ENCODE measurements at regions of chr2 and their contacts with region 1.

Region 1: DNA sequence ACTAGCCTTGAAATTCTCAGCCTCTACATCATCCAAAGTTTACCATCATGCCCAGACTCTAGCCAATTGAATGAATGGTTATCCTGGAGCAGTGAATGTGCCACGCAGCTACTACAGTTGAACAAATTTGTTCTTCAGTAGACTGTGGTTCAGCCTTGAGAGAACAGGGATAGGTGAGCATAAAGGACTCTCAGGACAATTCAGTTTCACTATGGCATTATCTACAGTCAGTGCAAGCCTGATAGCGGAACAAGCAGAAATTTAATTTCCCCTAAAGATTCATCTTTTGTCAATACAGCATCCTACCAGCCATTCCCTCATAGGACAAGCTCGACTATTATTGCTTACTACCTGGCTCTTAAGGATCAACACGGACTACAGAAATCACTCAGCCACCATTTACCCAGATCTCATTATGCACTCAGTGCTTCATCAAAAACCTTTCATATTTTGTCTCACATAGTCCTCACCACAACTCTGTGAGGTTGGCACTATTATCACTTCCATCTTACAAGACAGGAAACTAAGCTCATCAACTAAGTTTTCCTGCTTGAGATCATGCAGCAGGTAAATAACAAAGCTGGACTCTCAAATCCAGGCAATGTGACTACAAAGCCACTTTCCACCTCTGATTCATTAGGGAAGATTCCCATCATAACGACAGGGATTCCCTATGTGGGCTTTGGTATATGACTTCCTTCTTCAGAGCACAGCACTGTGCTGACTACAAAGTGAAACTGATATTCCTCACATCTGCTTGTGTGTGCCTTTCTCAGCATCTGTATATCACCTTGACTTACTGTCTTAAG is 181.5 kb upstream of the ACVR2A start:
- DNase-seq: no peak
- ATAC-seq: peak; percentile 88
- H3K4me3 Mint-ChIP-seq: peak overlapping the region; percentile 58
- H3K27ac Mint-ChIP-seq: peak overlapping the region; percentile 85
- H3K4me1 Mint-ChIP-seq: peaks cover 24% of the 10 kb centered on the region
- H3K27me3 Mint-ChIP-seq: no peaks in the 10 kb centered on the region

Region 2: DNA sequence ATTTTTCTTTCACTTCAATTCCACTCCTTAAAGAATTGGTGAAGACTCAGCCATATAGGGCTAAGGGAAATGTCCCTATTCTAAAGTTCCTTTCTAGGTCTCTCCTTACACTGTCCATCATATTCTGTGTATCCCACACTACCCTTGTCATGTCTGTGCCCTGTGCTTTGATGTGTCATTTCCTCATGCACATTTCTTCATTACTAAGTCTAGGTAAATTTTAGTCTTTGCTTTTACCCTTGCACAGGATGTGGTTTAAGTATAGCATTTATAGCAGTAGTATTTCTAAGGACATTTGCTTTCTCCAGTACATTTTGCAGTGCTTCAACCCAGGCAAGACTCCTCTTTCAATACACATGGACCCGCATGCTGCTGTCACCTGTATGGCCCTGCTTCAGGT is 40.0 kb before region 1 on chr2:
- CTCF ChIA-PET with region 1: no interaction called
- POLR2A ChIA-PET with region 1: no interaction called
- intact Hi-C with region 1: loop called in 1 of 2 experiments (anchors 5 kb)
- DNase-seq: peak; percentile 23
- ATAC-seq: peak; percentile 99
- H3K4me3 Mint-ChIP-seq: peak overlapping the region; percentile 41
- H3K27ac Mint-ChIP-seq: peak overlapping the region; percentile 81
- H3K4me1 Mint-ChIP-seq: peaks cover 34% of the 10 kb centered on the region
- H3K27me3 Mint-ChIP-seq: no peaks in the 10 kb centered on the region

Region 3: GRCh38 chr2:147628971-147629421 is 34.4 kb before region 1 on chr2:
- CTCF ChIA-PET with region 1: no interaction called
- POLR2A ChIA-PET with region 1: no interaction called
- intact Hi-C with region 1: loop called (anchors 2 to 5 kb)
- DNase-seq: no peak
- ATAC-seq: peak; percentile 43
- H3K4me3 Mint-ChIP-seq: no peak overlapping the region
- H3K27ac Mint-ChIP-seq: peak overlapping the region; percentile 59
- H3K4me1 Mint-ChIP-seq: peaks cover 57% of the 10 kb centered on the region
- H3K27me3 Mint-ChIP-seq: no peaks in the 10 kb centered on the region

Region 4: DNA sequence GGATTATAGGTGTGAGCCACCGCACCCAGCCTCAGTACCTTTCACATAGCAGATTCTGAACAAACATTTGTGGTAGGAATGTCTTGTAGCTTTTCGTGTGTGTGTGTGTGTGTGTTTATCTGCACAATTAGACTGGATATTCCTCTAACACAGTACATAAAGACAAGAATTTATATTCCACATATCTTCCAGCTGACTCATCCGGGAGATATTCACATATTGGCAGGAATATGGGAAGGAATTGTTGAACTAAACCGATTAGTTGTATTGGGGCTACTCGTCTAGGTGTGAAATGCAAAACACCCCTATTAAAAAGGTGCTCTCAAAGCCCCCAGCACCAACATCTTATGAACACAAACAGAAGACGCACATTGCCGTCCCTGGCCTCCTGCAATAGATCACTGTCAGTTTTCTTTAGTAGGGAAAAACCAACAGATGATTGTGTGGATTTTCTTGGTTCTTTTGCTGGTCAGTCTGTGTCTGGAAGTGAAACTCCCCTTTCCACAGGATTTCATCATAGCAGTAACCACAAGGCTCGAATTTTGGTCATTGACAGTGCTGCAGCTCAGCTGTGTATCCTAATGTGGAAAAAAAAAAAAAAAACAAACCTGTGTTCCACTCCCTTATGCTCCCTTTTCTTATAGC is 27.0 kb before region 1 on chr2:
- CTCF ChIA-PET with region 1: no interaction called
- POLR2A ChIA-PET with region 1: no interaction called
- intact Hi-C with region 1: loop called (anchors 1 to 2 kb)
- DNase-seq: no peak
- ATAC-seq: no peak
- H3K4me3 Mint-ChIP-seq: no peak overlapping the region
- H3K27ac Mint-ChIP-seq: no peak overlapping the region
- H3K4me1 Mint-ChIP-seq: peaks cover 27% of the 10 kb centered on the region
- H3K27me3 Mint-ChIP-seq: no peaks in the 10 kb centered on the region

Region 5: GRCh38 chr2:147679191-147679954 is 16.0 kb after region 1 on chr2:
- CTCF ChIA-PET with region 1: no interaction called
- POLR2A ChIA-PET with region 1: no interaction called
- intact Hi-C with region 1: no loop called
- DNase-seq: no peak
- ATAC-seq: no peak
- H3K4me3 Mint-ChIP-seq: no peak overlapping the region
- H3K27ac Mint-ChIP-seq: no peak overlapping the region
- H3K4me1 Mint-ChIP-seq: no peaks in the 10 kb centered on the region
- H3K27me3 Mint-ChIP-seq: no peaks in the 10 kb centered on the region

Region 6: DNA sequence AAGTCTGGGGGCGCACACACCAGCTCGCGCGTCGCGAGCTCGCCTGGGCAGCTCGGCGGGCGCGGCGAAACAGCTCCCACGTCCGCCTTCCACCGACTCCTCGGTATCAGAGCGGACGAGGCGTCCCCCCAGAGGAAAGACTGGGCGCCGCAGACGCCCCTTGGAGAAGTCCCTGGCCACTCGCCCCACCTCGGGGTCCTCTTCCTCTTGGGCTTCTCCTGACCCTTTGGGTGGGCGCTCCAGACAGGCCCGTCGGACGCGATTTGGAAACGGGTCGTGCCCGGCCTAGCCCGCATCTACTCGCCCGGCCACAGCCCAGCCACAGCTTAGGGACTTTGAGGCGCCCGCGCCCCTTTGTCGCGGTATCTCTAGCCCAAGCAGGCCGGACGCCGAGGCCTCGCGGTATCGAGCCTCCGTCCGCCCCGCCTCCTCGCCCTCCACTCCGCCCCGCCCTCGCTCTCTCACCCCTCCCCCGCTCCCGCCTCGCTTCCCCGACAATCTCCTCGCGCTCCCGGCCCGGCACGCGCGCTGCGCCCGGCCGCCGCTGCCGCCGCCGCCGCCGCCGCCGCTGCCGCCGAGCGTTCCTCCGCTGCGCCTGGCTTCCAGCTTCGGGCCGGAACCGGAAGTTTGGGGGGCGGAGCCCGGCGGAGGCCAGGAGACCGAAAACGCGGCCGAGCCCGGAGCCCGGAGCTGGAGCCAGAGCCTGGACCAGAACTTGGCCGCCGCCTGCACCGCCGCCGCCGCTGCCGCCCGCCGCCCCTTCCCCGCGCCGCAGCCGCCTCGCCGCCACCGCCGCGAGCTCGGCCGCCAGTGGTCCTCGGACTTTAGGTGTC is 180.7 kb after region 1 on chr2:
- CTCF ChIA-PET with region 1: no interaction called
- POLR2A ChIA-PET with region 1: no interaction called
- intact Hi-C with region 1: loop called in 1 of 2 experiments (anchors 1 kb)
- DNase-seq: peak; percentile 93
- ATAC-seq: peak; percentile 82
- H3K4me3 Mint-ChIP-seq: peak overlapping the region; percentile 82
- H3K27ac Mint-ChIP-seq: peak overlapping the region; percentile 77
- H3K4me1 Mint-ChIP-seq: peaks cover 34% of the 10 kb centered on the region
- H3K27me3 Mint-ChIP-seq: peaks cover 14% of the 10 kb centered on the region

Region 7: DNA sequence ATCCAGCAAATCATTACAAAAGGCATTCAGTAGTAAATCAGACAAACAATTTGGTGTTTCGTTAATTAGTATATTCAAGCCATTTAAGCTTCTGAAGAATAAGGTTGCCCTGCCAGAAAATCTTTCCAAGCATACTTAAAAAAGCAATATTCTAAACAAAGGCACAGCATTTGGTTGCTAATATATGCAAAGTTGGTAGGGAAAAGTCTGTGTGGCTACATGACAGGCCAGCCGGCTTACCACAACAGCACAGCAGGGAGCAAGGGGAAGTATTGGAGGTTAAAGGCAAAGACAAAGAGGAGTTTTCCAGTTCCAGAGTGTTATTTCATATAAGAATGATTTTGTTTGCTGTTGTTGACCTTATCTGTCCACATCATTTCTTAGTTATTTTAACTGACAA is 639.8 kb after region 1 on chr2:
- CTCF ChIA-PET with region 1: no interaction called
- POLR2A ChIA-PET with region 1: no interaction called
- intact Hi-C with region 1: no loop called
- DNase-seq: no peak
- ATAC-seq: no peak
- H3K4me3 Mint-ChIP-seq: no peak overlapping the region
- H3K27ac Mint-ChIP-seq: no peak overlapping the region
- H3K4me1 Mint-ChIP-seq: no peaks in the 10 kb centered on the region
- H3K27me3 Mint-ChIP-seq: no peaks in the 10 kb centered on the region

Measured in activated CD4-positive, alpha-beta T cell treated with anti-CD3 and anti-CD28 coated beads for 36 hours (primary cell).